PC-3 (cell line): ENCODE measurements at regions of chr10 and their contacts with region 1.

Region 1: GRCh38 chr10:93816123-93816747 is 58.5 kb downstream of the LGI1 start:
- DNase-seq: peak; percentile 71
- ATAC-seq: peak; percentile 77
- H3K4me3 ChIP-seq: peak overlapping the region; percentile 38; the same call in 1 of the 2 replicates
- H3K27ac ChIP-seq: no peak overlapping the region
- H3K4me1 ChIP-seq: peaks cover 10% of the 10 kb centered on the region
- H3K27me3 ChIP-seq: no peaks in the 10 kb centered on the region
- CTCF ChIP-seq: peak; percentile 73

Region 2: GRCh38 chr10:93138113-93138870 is 677.9 kb before region 1 on chr10:
- CTCF ChIA-PET with region 1: no interaction called
- POLR2A ChIA-PET with region 1: no interaction called
- intact Hi-C with region 1: no loop called
- DNase-seq: no peak
- ATAC-seq: no peak
- H3K4me3 ChIP-seq: no peak overlapping the region
- H3K27ac ChIP-seq: no peak overlapping the region
- H3K4me1 ChIP-seq: no peaks in the 10 kb centered on the region
- H3K27me3 ChIP-seq: no peaks in the 10 kb centered on the region
- CTCF ChIP-seq: no peak

Region 3: GRCh38 chr10:93541402-93542357 is 274.6 kb before region 1 on chr10:
- CTCF ChIA-PET with region 1: interaction called, 4 read pairs
- POLR2A ChIA-PET with region 1: no interaction called
- intact Hi-C with region 1: loop called (anchors 10 kb)
- DNase-seq: peak; percentile 72
- ATAC-seq: peak; percentile 97
- H3K4me3 ChIP-seq: peak overlapping the region; percentile 60
- H3K27ac ChIP-seq: no peak overlapping the region
- H3K4me1 ChIP-seq: peaks cover 8% of the 10 kb centered on the region; the same call in 1 of the 2 replicates
- H3K27me3 ChIP-seq: no peaks in the 10 kb centered on the region
- CTCF ChIP-seq: peak; percentile 91

Region 4: GRCh38 chr10:93702211-93703001 is 113.8 kb before region 1 on chr10 and contains the start of gene FRA10AC1:
- CTCF ChIA-PET with region 1: interaction called, 8 read pairs
- POLR2A ChIA-PET with region 1: interaction called, 12 read pairs
- intact Hi-C with region 1: loop called (anchors 1 kb)
- DNase-seq: peak; percentile 80
- ATAC-seq: peak; percentile 93
- H3K4me3 ChIP-seq: peak within 1 kb of the TSS; percentile 76
- H3K27ac ChIP-seq: peak within 1 kb of the TSS; percentile 10; the same call in 1 of the 2 replicates
- H3K4me1 ChIP-seq: peaks cover 6% of the 10 kb centered on the region; the same call in 1 of the 2 replicates
- H3K27me3 ChIP-seq: no peaks in the 10 kb centered on the region
- CTCF ChIP-seq: peak; percentile 60
- total RNA-seq, gene FRA10AC1: 3.8 and 5.5 TPM in 2 replicates

Region 5: GRCh38 chr10:93746844-93747284 is 69.4 kb before region 1 on chr10:
- CTCF ChIA-PET with region 1: interaction called, 16 read pairs
- POLR2A ChIA-PET with region 1: no interaction called
- intact Hi-C with region 1: loop called (anchors 1 kb)
- DNase-seq: peak; percentile 94
- ATAC-seq: peak; percentile 89
- H3K4me3 ChIP-seq: no peak overlapping the region
- H3K27ac ChIP-seq: peak overlapping the region; percentile 41; the same call in 1 of the 2 replicates
- H3K4me1 ChIP-seq: peaks cover 8% of the 10 kb centered on the region; the same call in 1 of the 2 replicates
- H3K27me3 ChIP-seq: no peaks in the 10 kb centered on the region
- CTCF ChIP-seq: peak; percentile 67

Region 6: DNA sequence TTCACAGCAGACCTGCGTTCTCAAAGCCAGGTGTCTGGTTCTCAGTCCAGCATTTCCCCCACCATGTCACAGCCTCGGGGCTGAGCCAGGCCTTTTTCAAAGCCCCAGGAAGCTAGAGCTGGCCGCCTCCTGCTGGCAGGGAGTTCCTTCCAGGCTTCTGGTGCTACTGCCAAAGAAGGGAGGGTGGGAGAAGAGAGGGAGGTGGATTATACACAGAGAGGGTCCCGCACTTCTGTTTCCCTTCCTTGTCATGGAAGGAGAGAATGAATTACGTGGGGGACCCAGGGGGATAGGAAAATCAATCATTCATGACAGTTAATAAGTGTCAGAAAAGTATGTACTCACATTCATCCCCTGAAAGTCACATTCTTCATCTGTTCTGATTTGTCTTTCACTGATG is 59.1 kb before region 1 on chr10:
- CTCF ChIA-PET with region 1: no interaction called
- POLR2A ChIA-PET with region 1: no interaction called
- intact Hi-C with region 1: no loop called
- DNase-seq: no peak
- ATAC-seq: no peak
- H3K4me3 ChIP-seq: no peak overlapping the region
- H3K27ac ChIP-seq: no peak overlapping the region
- H3K4me1 ChIP-seq: peaks cover 8% of the 10 kb centered on the region
- H3K27me3 ChIP-seq: no peaks in the 10 kb centered on the region
- CTCF ChIP-seq: no peak

Region 7: DNA sequence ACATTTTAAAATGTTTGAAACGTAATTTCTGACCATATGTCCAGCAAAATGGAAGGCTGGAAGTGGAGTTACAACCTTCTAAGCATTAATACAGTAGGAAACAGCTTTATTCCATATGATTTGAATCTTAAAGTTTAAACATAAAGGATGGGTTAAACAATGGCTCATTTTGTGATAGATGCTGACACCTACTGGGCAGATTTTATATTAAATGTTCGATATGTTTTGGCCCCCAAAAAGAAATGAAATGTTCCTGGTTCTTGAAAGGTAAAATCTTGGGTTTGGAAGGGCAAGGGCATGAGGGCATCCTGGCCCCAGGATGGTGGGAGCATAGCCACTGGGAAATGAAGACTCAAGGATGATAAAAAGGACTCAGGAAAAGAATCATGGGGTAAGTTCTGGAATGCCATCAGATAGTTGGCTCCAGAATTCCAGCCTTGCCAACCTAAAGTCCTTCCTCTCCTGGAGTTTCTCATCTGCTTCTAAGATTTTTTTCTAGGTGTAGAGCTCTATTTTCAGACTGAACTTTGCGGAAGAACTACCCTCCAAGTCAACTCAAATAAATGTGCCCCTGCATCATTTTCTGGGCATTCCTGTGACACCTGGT is 42.9 kb after region 1 on chr10:
- CTCF ChIA-PET with region 1: interaction called, 11 read pairs
- POLR2A ChIA-PET with region 1: no interaction called
- intact Hi-C with region 1: loop called (anchors 2 kb)
- DNase-seq: peak; percentile 35
- ATAC-seq: no peak; the same call in 1 of the 2 replicates
- H3K4me3 ChIP-seq: no peak overlapping the region
- H3K27ac ChIP-seq: no peak overlapping the region
- H3K4me1 ChIP-seq: no peaks in the 10 kb centered on the region
- H3K27me3 ChIP-seq: no peaks in the 10 kb centered on the region
- CTCF ChIP-seq: peak; percentile 61

Region 8: DNA sequence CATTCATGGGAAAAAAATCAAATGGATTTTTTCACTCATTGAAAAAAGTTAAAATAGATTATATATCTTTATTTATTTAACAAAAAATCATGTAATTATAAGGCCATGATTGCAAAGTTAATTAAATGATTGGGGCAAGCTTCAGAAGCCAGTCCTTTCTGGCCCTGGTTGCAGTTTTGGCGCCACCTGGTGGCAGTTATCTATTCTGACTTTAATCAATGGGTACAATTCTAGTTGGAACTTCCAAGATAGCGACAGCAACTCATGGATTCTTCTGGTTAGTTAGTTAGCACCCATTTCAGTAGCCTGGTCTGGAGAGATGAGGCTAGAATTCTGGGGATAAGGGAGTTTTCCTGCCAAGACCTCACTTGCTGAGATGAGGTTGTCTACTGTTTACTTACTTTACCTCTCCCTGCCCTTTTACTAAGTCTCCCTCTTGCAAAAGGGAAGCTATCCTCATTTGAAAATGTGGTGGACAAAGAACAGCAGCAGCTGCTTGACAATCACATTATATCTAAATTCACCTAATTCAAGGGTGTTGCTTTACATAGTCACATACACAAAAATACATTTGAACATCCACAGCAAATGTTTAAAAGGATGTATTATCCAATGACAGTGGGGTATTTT is 504.2 kb after region 1 on chr10:
- CTCF ChIA-PET with region 1: interaction called, 17 read pairs
- POLR2A ChIA-PET with region 1: no interaction called
- intact Hi-C with region 1: loop called (anchors 1 kb)
- DNase-seq: peak; percentile 73
- ATAC-seq: peak; percentile 53
- H3K4me3 ChIP-seq: no peak overlapping the region
- H3K27ac ChIP-seq: no peak overlapping the region
- H3K4me1 ChIP-seq: no peaks in the 10 kb centered on the region
- H3K27me3 ChIP-seq: no peaks in the 10 kb centered on the region
- CTCF ChIP-seq: peak; percentile 69

Region 9: DNA sequence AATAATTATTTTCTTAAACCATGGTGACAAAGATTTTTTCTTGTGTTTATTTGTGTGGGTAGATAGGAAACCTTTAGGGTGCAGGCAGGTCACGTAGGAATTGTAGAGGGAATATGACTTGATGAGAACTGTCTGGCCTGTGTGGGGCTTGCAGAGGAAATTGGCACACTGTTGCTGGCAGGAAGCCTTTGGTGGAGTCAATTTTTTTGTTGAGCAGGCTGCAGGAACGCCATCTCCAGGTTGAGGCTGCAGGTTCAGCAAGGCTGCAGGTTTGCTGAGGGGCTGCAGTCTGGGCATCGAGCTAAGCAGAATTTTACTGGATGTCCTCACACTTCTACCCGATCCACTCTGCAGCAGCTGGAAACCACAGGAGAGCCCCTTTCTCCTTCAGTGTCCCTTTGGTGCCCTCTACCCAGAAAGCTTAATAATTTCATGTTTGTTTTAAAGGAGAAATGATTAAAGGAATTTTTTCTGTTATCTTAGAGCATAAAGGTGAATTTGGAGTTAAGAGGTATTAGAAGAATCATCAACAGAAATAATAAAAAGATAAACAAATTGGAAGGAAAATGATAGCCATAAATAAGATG is 623.1 kb after region 1 on chr10:
- CTCF ChIA-PET with region 1: interaction called, 10 read pairs
- POLR2A ChIA-PET with region 1: no interaction called
- intact Hi-C with region 1: loop called (anchors 1 kb)
- DNase-seq: no peak
- ATAC-seq: no peak
- H3K4me3 ChIP-seq: no peak overlapping the region
- H3K27ac ChIP-seq: no peak overlapping the region
- H3K4me1 ChIP-seq: no peaks in the 10 kb centered on the region
- H3K27me3 ChIP-seq: no peaks in the 10 kb centered on the region
- CTCF ChIP-seq: no peak